Activated CD4-positive, alpha-beta memory T cell treated with anti-CD3 and anti-CD28 coated beads, Interleukin-2, amount 10 ng/mL, durations not matched to agents 7 days and 5 days (primary cell): ENCODE measurements at regions of chr1 and their contacts with region 1.

Region 1: GRCh38 chr1:116514708-116515525 is 55.9 kb downstream of the CD58 start:
- DNase-seq: peak; percentile 80
- H3K4me3 Mint-ChIP-seq: peak overlapping the region; percentile 57
- H3K27ac Mint-ChIP-seq: peak overlapping the region; percentile 93
- H3K4me1 Mint-ChIP-seq: peaks cover 74% of the 10 kb centered on the region
- H3K27me3 Mint-ChIP-seq: no peaks in the 10 kb centered on the region

Region 2: DNA sequence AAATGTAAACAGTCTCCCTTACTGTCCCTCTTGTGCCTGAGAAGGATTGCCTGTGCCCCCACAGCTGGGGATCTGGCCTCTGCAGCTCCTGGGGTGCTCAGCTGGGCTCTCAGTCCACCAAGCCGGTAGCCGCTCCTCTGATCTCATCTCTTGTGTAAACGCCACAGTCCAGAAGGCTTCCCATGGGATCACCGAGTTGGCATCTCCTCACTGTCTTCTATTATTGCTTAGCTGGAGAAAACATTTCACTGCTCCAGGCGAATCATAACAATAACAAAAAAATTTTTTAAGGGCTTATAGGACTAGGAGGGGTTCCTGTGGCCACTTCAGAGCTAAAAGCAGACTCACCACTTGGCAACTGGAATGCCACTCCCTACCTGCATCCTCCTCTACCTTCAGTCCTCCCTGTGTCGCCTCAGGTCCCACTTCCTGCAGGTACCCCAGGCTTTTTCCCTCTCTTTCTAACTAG is 66.1 kb before region 1 on chr1:
- CTCF ChIA-PET with region 1: no interaction called
- POLR2A ChIA-PET with region 1: no interaction called
- DNase-seq: no peak
- H3K4me3 Mint-ChIP-seq: no peak overlapping the region
- H3K27ac Mint-ChIP-seq: no peak overlapping the region
- H3K4me1 Mint-ChIP-seq: no peaks in the 10 kb centered on the region
- H3K27me3 Mint-ChIP-seq: no peaks in the 10 kb centered on the region

Region 3: GRCh38 chr1:116485071-116485735 is 29.7 kb before region 1 on chr1:
- CTCF ChIA-PET with region 1: interaction called, 12 read pairs
- POLR2A ChIA-PET with region 1: interaction called, 3 read pairs
- DNase-seq: peak; percentile 87
- H3K4me3 Mint-ChIP-seq: no peak overlapping the region
- H3K27ac Mint-ChIP-seq: no peak overlapping the region
- H3K4me1 Mint-ChIP-seq: peaks cover 9% of the 10 kb centered on the region
- H3K27me3 Mint-ChIP-seq: peaks cover 3% of the 10 kb centered on the region

Region 4: GRCh38 chr1:116504308-116505156 is 10.4 kb before region 1 on chr1:
- CTCF ChIA-PET with region 1: interaction called, 31 read pairs
- POLR2A ChIA-PET with region 1: interaction called, 92 read pairs
- DNase-seq: peak; percentile 93
- H3K4me3 Mint-ChIP-seq: peak overlapping the region; percentile 1
- H3K27ac Mint-ChIP-seq: peak overlapping the region; percentile 89
- H3K4me1 Mint-ChIP-seq: peaks cover 90% of the 10 kb centered on the region
- H3K27me3 Mint-ChIP-seq: no peaks in the 10 kb centered on the region

Region 5: GRCh38 chr1:116544588-116545358 is 29.9 kb after region 1 on chr1:
- CTCF ChIA-PET with region 1: interaction called, 4 read pairs
- POLR2A ChIA-PET with region 1: interaction called, 46 read pairs
- DNase-seq: no peak
- H3K4me3 Mint-ChIP-seq: peak overlapping the region; percentile 54
- H3K27ac Mint-ChIP-seq: peak overlapping the region; percentile 89
- H3K4me1 Mint-ChIP-seq: peaks cover 80% of the 10 kb centered on the region
- H3K27me3 Mint-ChIP-seq: no peaks in the 10 kb centered on the region

Region 6: DNA sequence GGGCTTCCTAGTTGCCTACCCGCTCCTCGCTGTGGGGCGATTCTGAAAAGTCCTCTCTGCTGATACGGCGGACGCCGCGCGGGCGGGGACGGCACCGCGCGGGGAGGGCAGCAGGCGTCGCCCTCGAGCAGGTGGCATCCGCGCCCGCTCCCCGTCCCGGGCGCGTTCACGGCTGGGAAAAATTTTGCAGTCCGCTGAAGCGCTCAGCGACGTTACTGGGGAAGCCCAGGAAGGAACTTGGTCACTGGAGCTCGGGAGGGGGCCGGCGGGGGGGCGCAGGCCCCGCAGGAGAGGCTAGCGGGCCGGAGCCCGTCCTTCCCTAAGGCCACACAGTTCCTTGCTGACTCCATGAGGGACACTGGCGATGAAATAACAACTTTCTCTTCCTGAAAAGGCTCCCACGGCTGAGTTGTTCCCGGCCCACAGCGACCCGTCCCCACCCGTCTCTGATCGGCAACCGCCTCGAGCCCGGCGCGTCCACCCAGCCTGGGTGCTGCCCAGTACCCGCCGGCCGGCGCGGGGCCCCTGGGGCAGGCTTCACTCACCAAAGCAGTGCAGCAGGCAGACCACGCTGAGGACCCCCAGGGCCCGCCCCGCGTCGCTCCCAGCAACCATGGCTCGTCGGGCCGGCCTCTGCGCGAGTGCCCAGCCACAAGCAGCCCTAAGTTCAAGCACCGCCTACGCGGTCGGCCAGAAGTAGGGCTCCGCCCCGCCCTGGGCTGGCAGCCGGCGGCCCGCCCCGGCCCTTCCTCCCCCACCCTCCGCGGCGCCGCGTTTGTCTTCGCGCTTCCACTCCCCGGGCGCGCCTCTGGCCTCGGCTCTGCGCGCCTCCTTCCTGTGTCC is 55.7 kb after region 1 on chr1 and contains the start of gene CD58:
- CTCF ChIA-PET with region 1: interaction called, 6 read pairs
- POLR2A ChIA-PET with region 1: interaction called, 10 read pairs
- DNase-seq: peak; percentile 89
- H3K4me3 Mint-ChIP-seq: peak within 1 kb of the TSS; percentile 89
- H3K27ac Mint-ChIP-seq: peak within 1 kb of the TSS; percentile 85
- H3K4me1 Mint-ChIP-seq: peaks cover 66% of the 10 kb centered on the region
- H3K27me3 Mint-ChIP-seq: no peaks in the 10 kb centered on the region
- total RNA-seq, gene CD58: 55.2 to 59.7 TPM

Region 7: GRCh38 chr1:116874733-116875249 is 359.9 kb after region 1 on chr1:
- CTCF ChIA-PET with region 1: no interaction called
- POLR2A ChIA-PET with region 1: no interaction called
- DNase-seq: no peak
- H3K4me3 Mint-ChIP-seq: no peak overlapping the region
- H3K27ac Mint-ChIP-seq: no peak overlapping the region
- H3K4me1 Mint-ChIP-seq: peaks cover 18% of the 10 kb centered on the region
- H3K27me3 Mint-ChIP-seq: no peaks in the 10 kb centered on the region